Sigmoid colon (tissue), 7 donors: ENCODE measurements at regions of chr10 and their contacts with region 1.

Region 1: GRCh38 chr10:31133628-31134302 is 102.1 kb upstream of the ZNF438 start:
- DNase-seq: peak; percentile 92
- H3K4me3 ChIP-seq: peak overlapping the region; percentile 49 to 56 (median 51)
- H3K27ac ChIP-seq: peak overlapping the region; percentile 85 to 90 (median 87)
- H3K4me1 ChIP-seq: peaks cover 0 to 47% (median 33%) of the 10 kb centered on the region in 4 donors
- H3K27me3 ChIP-seq: no peaks in the 10 kb centered on the region
- CTCF ChIP-seq: no peak
- EP300 ChIP-seq: no peak
- POLR2A ChIP-seq: peak; percentile 60 to 75

Region 2: GRCh38 chr10:31152421-31153135 is 18.8 kb after region 1 on chr10:
- intact Hi-C with region 1: loop called (anchors 1 kb)
- DNase-seq: no peak
- H3K4me3 ChIP-seq: no peak overlapping the region
- H3K27ac ChIP-seq: no peak overlapping the region
- H3K4me1 ChIP-seq: peaks cover 0 to 6% (median 4%) of the 10 kb centered on the region in 4 donors
- H3K27me3 ChIP-seq: no peaks in the 10 kb centered on the region
- CTCF ChIP-seq: no peak
- EP300 ChIP-seq: no peak
- POLR2A ChIP-seq: no peak